Calu3 (cell line): ENCODE measurements at regions of chrX and their contacts with region 1.

Region 1: DNA sequence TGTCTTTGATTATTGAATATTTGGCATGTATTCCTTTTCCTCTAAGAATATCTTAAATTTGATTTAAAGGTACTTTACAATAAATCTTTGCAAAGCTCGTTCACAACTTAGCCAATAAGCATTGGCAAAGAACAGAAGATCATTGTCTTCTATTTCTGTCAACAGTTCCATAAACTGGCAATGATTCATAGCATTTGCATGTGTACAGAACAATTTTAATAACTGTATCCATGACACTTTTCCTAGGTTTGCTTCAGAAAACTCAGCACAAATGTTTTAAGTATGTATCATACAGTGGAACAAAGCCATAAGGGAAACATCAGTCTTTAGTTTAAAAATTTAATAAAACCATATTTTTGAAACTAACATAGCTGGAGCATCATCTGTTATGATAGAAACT is 462.7 kb upstream of the RPS6KA3 start:
- DNase-seq: no peak
- H3K4me3 Mint-ChIP-seq: no peak overlapping the region
- H3K27ac Mint-ChIP-seq: no peak overlapping the region
- H3K4me1 Mint-ChIP-seq: peaks cover 9% of the 10 kb centered on the region
- H3K27me3 Mint-ChIP-seq: no peaks in the 10 kb centered on the region
- CTCF ChIP-seq: no peak

Region 2: GRCh38 chrX:20969002-20969401 is 239.6 kb after region 1 on chrX:
- CTCF ChIA-PET with region 1: no interaction called
- intact Hi-C with region 1: loop called (anchors 5 kb)
- DNase-seq: peak; percentile 36
- H3K4me3 Mint-ChIP-seq: no peak overlapping the region
- H3K27ac Mint-ChIP-seq: no peak overlapping the region
- H3K4me1 Mint-ChIP-seq: peaks cover 9% of the 10 kb centered on the region
- H3K27me3 Mint-ChIP-seq: no peaks in the 10 kb centered on the region
- CTCF ChIP-seq: no peak